H1 (cell line): ENCODE measurements at regions of chr1 and their contacts with region 1.

Region 1: DNA sequence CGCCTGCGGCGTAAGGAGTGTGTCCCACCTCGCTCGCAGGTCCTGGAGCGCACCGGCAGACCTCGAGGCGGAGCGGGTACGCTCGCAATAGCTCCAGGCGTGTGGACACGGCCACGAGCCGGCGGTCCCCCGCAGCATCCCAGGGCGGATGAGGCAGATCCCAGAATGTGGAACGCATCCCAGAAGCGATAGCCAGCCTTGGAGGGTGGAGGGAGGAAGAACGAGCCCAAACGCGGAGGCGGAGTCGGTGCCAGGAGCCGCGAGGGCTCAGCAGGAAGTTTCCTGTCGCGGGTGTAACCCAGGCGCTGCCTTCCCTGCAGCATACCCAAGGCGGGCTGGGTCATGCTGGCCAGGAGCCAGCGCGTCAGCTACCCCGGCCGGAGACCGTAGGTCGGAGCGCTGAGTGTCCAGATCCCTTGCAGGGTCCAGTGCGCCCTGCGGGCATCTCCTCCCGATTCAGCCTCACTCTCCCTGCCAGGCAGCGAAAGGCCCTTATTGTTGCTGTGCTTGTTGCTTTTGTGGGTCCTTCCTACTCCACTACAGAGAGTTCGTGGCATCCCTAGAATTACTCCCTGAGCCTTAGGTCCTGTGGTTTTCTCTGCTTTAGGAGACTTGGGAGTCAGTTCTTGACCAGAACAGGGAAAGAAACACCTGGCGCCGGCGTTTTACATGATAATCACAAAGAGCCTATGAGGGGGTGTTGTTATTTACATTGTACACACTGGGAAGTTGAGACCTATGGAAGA is 27.7 kb downstream of the STYXL2 start:
- DNase-seq: peak in 1 of 2 experiments; percentile 80
- H3K4me3 ChIP-seq: peak overlapping the region; percentile 39 to 64 (median 56)
- H3K27ac ChIP-seq: no peak overlapping the region
- H3K4me1 ChIP-seq: peaks cover 0 to 11% (median 3%) of the 10 kb centered on the region in 4 experiments; a peak in 5 of 7 replicates
- H3K27me3 ChIP-seq: no peaks in the 10 kb centered on the region; a peak in 2 of 7 replicates
- CTCF ChIP-seq: no peak
- EP300 ChIP-seq: no peak
- POLR2A ChIP-seq: peak in 1 of 2 experiments; percentile 36; a peak in 1 of 3 replicates
- RAD21 ChIP-seq: no peak

Region 2: GRCh38 chr1:166960858-166961474 is 160.6 kb before region 1 on chr1:
- CTCF ChIA-PET with region 1: no interaction called
- POLR2A ChIA-PET with region 1: no interaction called
- DNase-seq: no peak
- H3K4me3 ChIP-seq: no peak overlapping the region
- H3K27ac ChIP-seq: no peak overlapping the region
- H3K4me1 ChIP-seq: no peaks in the 10 kb centered on the region
- H3K27me3 ChIP-seq: no peaks in the 10 kb centered on the region
- CTCF ChIP-seq: no peak
- EP300 ChIP-seq: no peak
- POLR2A ChIP-seq: no peak
- RAD21 ChIP-seq: no peak

Region 3: GRCh38 chr1:167043752-167044488 is 77.6 kb before region 1 on chr1:
- CTCF ChIA-PET with region 1: no interaction called
- POLR2A ChIA-PET with region 1: no interaction called
- DNase-seq: no peak
- H3K4me3 ChIP-seq: 0 out of 8 replicates have a peak overlapping the region, but pooled peaks of 1 of the 4 experiments have one; percentile 9
- H3K27ac ChIP-seq: no peak overlapping the region
- H3K4me1 ChIP-seq: peaks cover 0 to 3% (median 0%) of the 10 kb centered on the region in 4 experiments; a peak in 1 of 7 replicates
- H3K27me3 ChIP-seq: no peaks in the 10 kb centered on the region
- CTCF ChIP-seq: no peak
- EP300 ChIP-seq: no peak
- POLR2A ChIP-seq: no peak
- RAD21 ChIP-seq: no peak

Region 4: DNA sequence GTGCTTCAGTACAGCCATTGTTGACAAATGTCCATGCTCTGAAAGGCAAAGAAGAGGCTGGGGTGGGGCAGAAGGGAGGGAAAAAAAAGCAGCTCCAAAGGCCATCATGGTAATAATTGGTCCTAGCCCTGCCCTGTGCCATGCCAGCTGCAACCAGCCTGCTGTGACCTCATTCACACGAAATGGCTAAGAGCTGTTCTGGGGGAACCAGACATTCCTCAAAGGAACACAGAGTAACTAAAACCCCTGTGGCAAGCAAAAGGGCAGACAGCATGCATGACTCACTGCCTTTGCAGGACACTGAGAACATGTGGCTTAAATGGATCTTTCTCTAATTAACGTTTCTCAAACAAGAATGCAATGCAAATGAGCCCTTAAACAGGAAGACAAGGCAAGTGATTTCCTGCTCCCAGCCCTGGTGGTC is 14.7 kb after region 1 on chr1:
- CTCF ChIA-PET with region 1: interaction called, 81 read pairs
- POLR2A ChIA-PET with region 1: interaction called, 20 read pairs
- DNase-seq: no peak
- H3K4me3 ChIP-seq: no peak overlapping the region
- H3K27ac ChIP-seq: no peak overlapping the region
- H3K4me1 ChIP-seq: peaks cover 2 to 18% (median 11%) of the 10 kb centered on the region in 4 experiments; a peak in 5 of 7 replicates
- H3K27me3 ChIP-seq: no peaks in the 10 kb centered on the region
- CTCF ChIP-seq: no peak
- EP300 ChIP-seq: no peak
- POLR2A ChIP-seq: no peak
- RAD21 ChIP-seq: no peak

Region 5: GRCh38 chr1:167191953-167192352 is 70.4 kb after region 1 on chr1:
- CTCF ChIA-PET with region 1: interaction called, 12 read pairs
- POLR2A ChIA-PET with region 1: no interaction called
- DNase-seq: no peak
- H3K4me3 ChIP-seq: no peak overlapping the region
- H3K27ac ChIP-seq: no peak overlapping the region
- H3K4me1 ChIP-seq: no peaks in the 10 kb centered on the region; a peak in 1 of 7 replicates
- H3K27me3 ChIP-seq: no peaks in the 10 kb centered on the region
- CTCF ChIP-seq: no peak
- EP300 ChIP-seq: no peak
- POLR2A ChIP-seq: no peak
- RAD21 ChIP-seq: no peak